SK-N-SH (cell line): ENCODE measurements at regions of chr3 and their contacts with region 1.

Region 1: GRCh38 chr3:50272911-50273693 is 4.2 kb downstream of the SEMA3B start:
- DNase-seq: peak; percentile 98
- H3K4me3 ChIP-seq: peak overlapping the region; percentile 25 to 59; a peak in 3 of 4 replicates
- H3K27ac ChIP-seq: no peak overlapping the region
- H3K4me1 ChIP-seq: peaks cover 11 to 19% of the 10 kb centered on the region in 2 experiments; a peak in 2 of 4 replicates
- H3K27me3 ChIP-seq: 0 out of 2 replicates have a peak, but pooled peaks cover 16% of the 10 kb centered on the region
- CTCF ChIP-seq: peak; percentile 91
- EP300 ChIP-seq: no peak
- RAD21 ChIP-seq: peak; percentile 99

Region 2: GRCh38 chr3:50205414-50206276 is 67.5 kb before region 1 on chr3:
- CTCF ChIA-PET with region 1: interaction called, 15 read pairs
- POLR2A ChIA-PET with region 1: no interaction called
- DNase-seq: peak; percentile 62
- H3K4me3 ChIP-seq: peak overlapping the region; percentile 47 to 48; a peak in 3 of 4 replicates
- H3K27ac ChIP-seq: no peak overlapping the region
- H3K4me1 ChIP-seq: peaks cover 0 to 11% of the 10 kb centered on the region in 2 experiments; a peak in 1 of 4 replicates
- H3K27me3 ChIP-seq: peaks cover 28% of the 10 kb centered on the region
- CTCF ChIP-seq: no peak
- EP300 ChIP-seq: no peak
- RAD21 ChIP-seq: no peak

Region 3: DNA sequence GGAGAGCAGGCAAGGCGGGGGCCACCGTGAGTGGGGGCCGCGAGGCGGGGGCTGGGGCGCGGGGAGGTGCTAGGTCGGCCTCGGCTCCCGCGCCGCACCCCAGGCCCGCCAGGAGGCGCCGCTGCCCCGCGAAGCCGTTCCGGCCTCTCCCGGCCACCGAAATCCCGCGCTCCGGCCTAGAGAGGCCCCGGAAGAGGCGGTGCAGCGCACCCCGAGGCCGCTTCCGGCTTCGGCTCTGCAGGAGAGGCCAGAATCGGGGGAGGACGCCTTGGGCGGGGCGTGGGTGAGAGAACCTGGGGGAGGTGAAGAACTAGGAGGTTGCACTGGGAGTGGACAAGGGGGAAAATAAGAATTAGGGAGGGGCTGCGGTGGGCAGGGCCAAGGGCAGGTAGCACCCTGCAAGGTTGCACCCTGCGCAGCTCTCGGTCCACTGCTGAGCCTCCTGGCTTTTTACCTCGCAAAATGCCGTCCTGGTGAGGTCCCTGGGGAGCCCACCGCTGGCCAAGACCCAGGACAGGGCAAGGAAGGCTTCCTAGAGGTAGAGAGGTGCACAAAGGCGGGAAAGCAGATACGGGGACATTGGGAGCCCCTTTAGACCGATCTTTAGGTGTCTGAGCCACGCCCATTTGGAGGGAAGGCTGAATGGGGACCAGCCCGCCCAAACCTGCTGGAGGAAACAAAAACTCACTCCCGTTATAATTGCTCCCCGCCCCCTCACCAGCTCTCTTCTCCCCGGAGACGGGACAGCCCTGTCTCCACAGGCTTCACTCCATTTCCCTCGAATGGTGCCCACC is 45.5 kb before region 1 on chr3:
- CTCF ChIA-PET with region 1: interaction called, 91 read pairs
- POLR2A ChIA-PET with region 1: no interaction called
- DNase-seq: peak; percentile 96
- H3K4me3 ChIP-seq: peak overlapping the region; percentile 73 to 77
- H3K27ac ChIP-seq: peak overlapping the region; percentile 16 to 84; a peak in 3 of 4 replicates
- H3K4me1 ChIP-seq: peaks cover 0 to 9% of the 10 kb centered on the region in 2 experiments; a peak in 1 of 4 replicates
- H3K27me3 ChIP-seq: peaks cover 7% of the 10 kb centered on the region; the same call in 1 of the 2 replicates
- CTCF ChIP-seq: peak; percentile 69
- EP300 ChIP-seq: peak; percentile 19 to 41; a peak in 2 of 4 replicates
- RAD21 ChIP-seq: peak; percentile 86

Region 4: GRCh38 chr3:50260027-50260941 is 12.8 kb before region 1 on chr3:
- CTCF ChIA-PET with region 1: interaction called, 70 read pairs
- POLR2A ChIA-PET with region 1: no interaction called
- DNase-seq: peak; percentile 99
- H3K4me3 ChIP-seq: peak overlapping the region; percentile 59 to 60
- H3K27ac ChIP-seq: peak overlapping the region; percentile 76 to 94
- H3K4me1 ChIP-seq: peaks cover 24 to 32% of the 10 kb centered on the region in 2 experiments; a peak in 3 of 4 replicates
- H3K27me3 ChIP-seq: no peaks in the 10 kb centered on the region
- CTCF ChIP-seq: peak; percentile 82
- EP300 ChIP-seq: peak in 1 of 2 experiments; percentile 33; a peak in 1 of 4 replicates
- RAD21 ChIP-seq: peak; percentile 71

Region 5: DNA sequence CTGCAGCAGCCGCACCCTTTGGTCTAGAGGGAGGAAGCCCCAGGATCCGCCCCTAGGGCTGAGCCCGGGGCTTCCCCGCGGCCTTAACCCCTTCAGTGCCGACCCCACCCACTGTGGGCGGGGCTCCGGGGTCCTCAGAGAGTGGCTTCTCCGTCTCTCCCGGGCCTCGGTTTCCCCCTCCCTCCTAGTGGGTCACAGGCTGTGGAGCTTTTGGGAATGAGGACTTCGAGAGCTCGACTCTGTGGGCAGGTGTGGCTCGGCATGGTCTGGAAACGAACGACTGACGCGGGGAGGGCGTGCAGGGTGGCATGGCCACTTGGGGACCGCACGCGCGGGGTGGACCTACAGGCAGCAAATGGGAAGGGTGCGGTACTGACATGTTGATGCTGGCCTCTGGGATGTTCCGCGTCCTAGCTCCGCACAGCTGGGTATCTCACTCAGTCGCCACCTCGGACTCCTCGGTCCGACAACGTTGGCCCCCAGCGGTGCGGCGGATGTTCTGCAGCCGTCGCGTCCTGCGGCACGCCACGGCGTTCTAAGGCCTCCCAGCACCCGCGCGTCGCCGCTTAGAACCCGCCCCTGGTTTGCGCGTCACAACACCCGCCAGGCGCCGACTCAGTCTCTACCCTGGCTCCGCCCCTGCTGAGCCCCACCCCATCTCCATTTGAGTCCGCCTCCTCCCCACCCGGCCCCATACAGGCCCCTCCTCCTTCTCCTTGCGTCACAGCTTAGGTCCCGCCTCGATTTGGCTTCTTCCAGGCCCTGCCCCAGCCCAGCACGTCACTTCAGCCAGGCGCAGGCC is 25.9 kb after region 1 on chr3 and contains the starts of genes HYAL3 and NAA80:
- CTCF ChIA-PET with region 1: interaction called, 11 read pairs
- POLR2A ChIA-PET with region 1: interaction called, 3 read pairs
- DNase-seq: peak; percentile 99
- H3K4me3 ChIP-seq: peak within 1 kb of the TSS; percentile 84 to 87
- H3K27ac ChIP-seq: peak within 1 kb of the TSS; percentile 62 to 84; a peak in 3 of 4 replicates
- H3K4me1 ChIP-seq: peaks cover 10 to 38% of the 10 kb centered on the region in 2 experiments; a peak in 2 of 4 replicates
- H3K27me3 ChIP-seq: no peaks in the 10 kb centered on the region
- CTCF ChIP-seq: peak; percentile 31
- EP300 ChIP-seq: no peak
- RAD21 ChIP-seq: no peak
- polyA plus RNA-seq, gene HYAL3: 7.8 and 8.4 TPM in 2 replicates
- polyA plus RNA-seq, gene NAA80: 10.4 and 10.5 TPM in 2 replicates

Region 6: GRCh38 chr3:50815867-50816266 is 542.8 kb after region 1 on chr3:
- CTCF ChIA-PET with region 1: no interaction called
- POLR2A ChIA-PET with region 1: no interaction called
- DNase-seq: no peak
- H3K4me3 ChIP-seq: no peak overlapping the region
- H3K27ac ChIP-seq: no peak overlapping the region
- H3K4me1 ChIP-seq: no peaks in the 10 kb centered on the region
- H3K27me3 ChIP-seq: no peaks in the 10 kb centered on the region
- CTCF ChIP-seq: no peak
- EP300 ChIP-seq: no peak
- RAD21 ChIP-seq: no peak